Lower lobe of right lung (tissue), 2 donors: ENCODE measurements at regions of chr4 and their contacts with region 1.

Region 1: GRCh38 chr4:78951862-78952472 is 12.7 kb upstream of the PAQR3 start:
- DNase-seq: no peak
- ATAC-seq: peak; percentile 65 to 70
- H3K4me3 ChIP-seq: no peak overlapping the region
- H3K27ac ChIP-seq: no peak overlapping the region
- H3K4me1 ChIP-seq: no peaks in the 10 kb centered on the region
- H3K27me3 ChIP-seq: no peaks in the 10 kb centered on the region
- CTCF ChIP-seq: peak; percentile 73

Region 2: GRCh38 chr4:79250887-79251286 is 298.9 kb after region 1 on chr4:
- intact Hi-C with region 1: no loop called
- DNase-seq: no peak
- ATAC-seq: no peak
- H3K4me3 ChIP-seq: no peak overlapping the region
- H3K27ac ChIP-seq: no peak overlapping the region
- H3K4me1 ChIP-seq: no peaks in the 10 kb centered on the region
- H3K27me3 ChIP-seq: no peaks in the 10 kb centered on the region
- CTCF ChIP-seq: no peak

Region 3: DNA sequence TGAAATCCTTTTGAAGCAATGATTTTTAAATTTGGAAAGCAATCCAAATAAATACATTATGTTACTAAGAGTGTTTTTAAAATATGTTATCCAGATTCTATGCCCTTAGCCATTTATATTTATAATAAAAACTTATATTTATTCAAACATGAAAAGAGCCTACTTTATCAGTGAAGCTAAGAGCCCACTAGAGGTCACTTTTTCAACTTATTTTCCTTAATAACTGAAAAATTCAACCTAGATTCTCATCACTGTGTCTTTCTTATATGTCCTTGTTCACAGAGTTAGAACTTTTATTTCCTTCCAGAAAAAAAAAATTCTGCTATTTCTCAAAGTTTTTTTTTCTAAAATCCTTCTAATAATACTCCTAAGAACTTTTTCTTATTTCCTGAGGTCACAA is 1269.2 kb after region 1 on chr4:
- intact Hi-C with region 1: loop called (anchors 10 kb)
- DNase-seq: no peak
- ATAC-seq: no peak
- H3K4me3 ChIP-seq: no peak overlapping the region
- H3K27ac ChIP-seq: no peak overlapping the region
- H3K4me1 ChIP-seq: no peaks in the 10 kb centered on the region
- H3K27me3 ChIP-seq: peaks cover 19% of the 10 kb centered on the region
- CTCF ChIP-seq: peak; percentile 27